ENCODE measurements at regions of chr4 and their contacts with region 1.

Region 1: GRCh38 chr4:81724925-81725329 is 253.2 kb upstream of the RASGEF1B start:
- DNase-seq: peak; percentile 29
- H3K4me3 Mint-ChIP-seq: no peak overlapping the region
- H3K27ac Mint-ChIP-seq: no peak overlapping the region
- H3K4me1 Mint-ChIP-seq: peaks cover 8% of the 10 kb centered on the region
- H3K27me3 Mint-ChIP-seq: peaks cover 8% of the 10 kb centered on the region

Region 2: GRCh38 chr4:81648576-81649275 is 76.2 kb before region 1 on chr4:
- intact Hi-C with region 1: loop called (anchors 5 kb)
- DNase-seq: peak; percentile 22
- H3K4me3 Mint-ChIP-seq: peak overlapping the region; percentile 27
- H3K27ac Mint-ChIP-seq: peak overlapping the region; percentile 1
- H3K4me1 Mint-ChIP-seq: peaks cover 46% of the 10 kb centered on the region
- H3K27me3 Mint-ChIP-seq: no peaks in the 10 kb centered on the region

Region 3: DNA sequence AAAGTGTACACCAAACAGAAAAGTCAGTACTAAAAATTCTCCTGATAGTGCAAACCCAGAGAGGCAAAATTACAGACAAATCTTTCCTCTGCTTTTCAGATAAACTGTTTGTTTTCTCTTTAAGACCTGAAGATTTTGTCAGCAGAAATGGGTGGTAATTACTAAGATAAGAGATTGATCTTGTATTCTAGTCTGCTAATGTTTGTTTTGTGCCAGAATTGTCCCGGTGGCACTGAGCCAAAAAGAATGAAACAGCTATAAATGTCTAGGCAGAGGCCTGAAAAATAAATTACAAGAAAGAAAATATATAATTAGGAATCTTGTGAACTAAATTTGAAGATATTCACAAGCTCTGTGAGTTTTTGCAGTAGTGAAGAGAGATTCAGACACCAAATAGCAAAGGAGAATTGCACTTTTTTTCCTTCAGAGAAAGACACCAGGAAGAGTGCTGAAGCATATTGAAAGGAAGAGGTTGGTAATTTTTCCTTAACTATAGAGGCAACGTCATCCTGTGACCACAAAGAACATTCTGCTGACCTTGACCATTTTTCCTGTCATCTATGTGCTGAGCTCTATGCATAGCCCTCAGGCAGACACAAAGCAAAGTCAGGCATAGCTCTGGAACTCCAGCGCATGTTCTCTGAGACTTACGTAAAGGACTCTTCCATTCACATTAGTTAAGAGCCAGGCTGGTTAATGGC is 61.3 kb after region 1 on chr4:
- intact Hi-C with region 1: no loop called
- DNase-seq: no peak
- H3K4me3 Mint-ChIP-seq: no peak overlapping the region
- H3K27ac Mint-ChIP-seq: no peak overlapping the region
- H3K4me1 Mint-ChIP-seq: peaks cover 12% of the 10 kb centered on the region
- H3K27me3 Mint-ChIP-seq: no peaks in the 10 kb centered on the region

Region 4: DNA sequence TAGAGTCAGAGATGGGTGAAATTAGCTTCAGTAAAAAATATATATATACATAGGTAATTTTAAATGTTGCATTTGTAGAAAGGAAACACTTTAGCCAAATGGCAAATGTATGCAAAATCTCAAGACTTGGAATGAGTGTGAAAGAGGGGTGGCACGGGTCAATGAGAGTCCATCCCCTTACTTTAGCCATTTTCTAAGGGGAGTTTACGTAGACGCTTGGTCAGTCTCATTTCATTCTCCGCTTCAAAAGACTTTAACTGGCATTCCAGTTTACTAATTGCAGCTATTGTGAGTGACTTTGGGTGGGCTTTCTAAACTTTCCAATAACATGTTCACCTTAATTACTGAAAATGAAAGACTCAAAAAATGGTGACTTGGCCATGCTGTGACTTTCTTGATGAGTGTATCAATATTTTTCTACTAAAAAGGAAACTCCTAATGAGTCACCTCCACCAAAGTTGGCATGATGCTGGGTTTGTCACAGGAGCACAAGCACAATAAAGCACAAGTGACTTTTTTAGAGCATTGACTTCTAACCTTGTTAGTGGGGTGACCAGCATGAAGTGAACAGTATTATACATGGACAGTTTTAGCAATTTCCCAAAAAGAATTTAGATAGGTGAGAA is 102.8 kb after region 1 on chr4:
- intact Hi-C with region 1: loop called (anchors 10 kb)
- DNase-seq: no peak
- H3K4me3 Mint-ChIP-seq: no peak overlapping the region
- H3K27ac Mint-ChIP-seq: no peak overlapping the region
- H3K4me1 Mint-ChIP-seq: peaks cover 9% of the 10 kb centered on the region
- H3K27me3 Mint-ChIP-seq: no peaks in the 10 kb centered on the region